Naive thymus-derived CD4-positive, alpha-beta T cell (primary cell): ENCODE measurements at regions of chr4 and their contacts with region 1.

Region 1: DNA sequence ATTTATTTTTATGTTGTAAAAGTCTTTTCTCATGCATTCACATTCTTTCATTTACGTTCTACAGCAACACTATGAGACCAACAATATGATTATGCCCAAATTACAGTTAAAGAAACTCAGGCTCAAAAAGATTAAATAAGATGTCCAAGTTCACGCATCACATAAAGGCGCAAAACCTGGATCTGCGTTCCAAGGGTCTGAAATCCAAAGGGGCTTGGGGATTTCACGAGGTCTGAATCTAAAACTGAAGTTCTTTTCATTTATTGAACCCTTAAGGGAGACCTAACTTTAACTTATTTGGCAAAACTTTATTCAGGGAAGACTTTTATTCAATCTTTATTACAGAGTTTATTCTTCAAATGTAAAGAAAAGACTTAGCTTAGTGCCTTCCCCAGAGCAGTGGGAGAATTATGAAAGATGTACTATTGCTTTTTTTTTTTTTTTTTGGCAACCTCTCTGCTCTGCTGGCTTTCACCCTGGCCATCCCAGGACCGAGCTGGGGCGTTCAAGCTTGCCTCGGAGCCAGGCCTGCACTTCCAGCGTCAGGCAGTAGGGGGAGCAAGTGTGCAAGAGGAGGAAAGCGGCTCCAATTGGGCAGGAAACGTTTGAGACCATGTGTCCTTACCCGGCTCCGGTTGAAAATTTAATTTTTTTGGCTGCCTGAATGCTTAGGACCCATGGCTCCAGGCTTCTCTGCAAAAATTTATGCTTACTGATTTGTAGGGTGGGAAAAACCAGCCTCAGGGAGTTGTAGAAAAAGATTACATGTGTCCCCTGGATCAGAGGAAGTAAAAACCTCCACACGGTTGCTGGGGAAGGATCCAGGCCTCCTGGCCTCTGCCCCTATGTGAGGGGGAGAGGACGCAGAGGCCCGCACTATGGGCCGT is 344.3 kb upstream of the KLF3 start:
- DNase-seq: peak; percentile 73 to 96 (median 83)
- ATAC-seq: peak; percentile 91
- H3K4me3 ChIP-seq: peak overlapping the region; percentile 38
- H3K4me3 Mint-ChIP-seq: peak overlapping the region; percentile 80 to 95 (median 88)
- H3K27ac ChIP-seq: peak overlapping the region; percentile 68
- H3K27ac Mint-ChIP-seq: peak overlapping the region; percentile 87 to 98 (median 94)
- H3K4me1 ChIP-seq: peaks cover 19 to 35% of the 10 kb centered on the region in 2 donors
- H3K4me1 Mint-ChIP-seq: peaks cover 33 to 75% (median 70%) of the 10 kb centered on the region in 7 donors
- H3K27me3 ChIP-seq: no peaks in the 10 kb centered on the region
- H3K27me3 Mint-ChIP-seq: peaks cover 0 to 10% (median 0%) of the 10 kb centered on the region in 5 donors

Region 2: GRCh38 chr4:38062088-38062893 is 257.4 kb before region 1 on chr4:
- CTCF ChIA-PET with region 1: no interaction called
- POLR2A ChIA-PET with region 1: interaction called, 3 read pairs
- intact Hi-C with region 1: loop called (anchors 1 to 2 kb)
- DNase-seq: peak; percentile 15 to 55 (median 41)
- ATAC-seq: peak; percentile 78
- H3K4me3 ChIP-seq: peak overlapping the region; percentile 33
- H3K4me3 Mint-ChIP-seq: peak overlapping the region; percentile 66 to 95 (median 84)
- H3K27ac ChIP-seq: no peak overlapping the region
- H3K27ac Mint-ChIP-seq: peak overlapping the region in 8 of 9 donors; percentile 35 to 80 (median 61)
- H3K4me1 ChIP-seq: no peaks in the 10 kb centered on the region
- H3K4me1 Mint-ChIP-seq: peaks cover 0 to 20% (median 10%) of the 10 kb centered on the region in 7 donors
- H3K27me3 ChIP-seq: no peaks in the 10 kb centered on the region
- H3K27me3 Mint-ChIP-seq: no peaks in the 10 kb centered on the region

Region 3: DNA sequence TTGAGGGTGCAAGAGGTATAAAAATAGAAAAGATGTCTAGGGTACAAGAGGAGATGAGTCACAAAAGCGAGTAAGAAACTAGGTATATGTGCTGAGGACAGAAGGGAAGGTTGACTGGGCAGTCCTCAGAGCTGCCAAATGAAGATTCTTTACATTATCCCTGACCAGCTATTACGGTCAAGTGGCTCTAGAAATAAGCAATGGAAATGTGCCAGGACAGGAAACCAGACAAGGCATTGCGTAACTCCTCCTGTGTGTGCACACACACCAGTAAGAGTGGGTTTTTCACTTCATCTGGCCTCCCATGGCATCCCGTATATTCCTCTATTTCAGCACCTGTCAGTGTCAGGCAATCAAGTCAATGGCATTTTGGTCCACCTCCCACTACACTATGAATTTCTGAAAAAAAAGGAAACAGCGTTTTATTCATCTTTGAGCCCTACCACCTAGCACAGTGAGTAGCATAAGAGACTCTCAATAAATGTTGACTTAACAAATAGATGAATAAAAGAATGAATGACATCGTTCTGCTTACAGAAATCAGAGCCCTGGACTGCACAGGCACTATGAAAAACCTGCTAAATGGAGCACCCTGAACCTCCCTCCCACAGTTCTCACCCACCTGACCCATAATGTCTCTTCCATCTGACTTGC is 281.7 kb after region 1 on chr4:
- CTCF ChIA-PET with region 1: interaction called, 5 read pairs
- POLR2A ChIA-PET with region 1: no interaction called
- intact Hi-C with region 1: loop called in 1 of 2 experiments (anchors 1 kb)
- DNase-seq: no peak
- ATAC-seq: no peak
- H3K4me3 ChIP-seq: no peak overlapping the region
- H3K4me3 Mint-ChIP-seq: no peak overlapping the region
- H3K27ac ChIP-seq: no peak overlapping the region
- H3K27ac Mint-ChIP-seq: peak overlapping the region in 4 of 9 donors; percentile 18 to 27 (median 20)
- H3K4me1 ChIP-seq: peaks cover 5% of the 10 kb centered on the region in 2 donors
- H3K4me1 Mint-ChIP-seq: peaks cover 16 to 40% (median 24%) of the 10 kb centered on the region in 7 donors
- H3K27me3 ChIP-seq: no peaks in the 10 kb centered on the region
- H3K27me3 Mint-ChIP-seq: peaks cover 0 to 10% (median 0%) of the 10 kb centered on the region in 5 donors

Region 4: GRCh38 chr4:39514888-39515401 is 1195.2 kb after region 1 on chr4:
- CTCF ChIA-PET with region 1: no interaction called
- POLR2A ChIA-PET with region 1: no interaction called
- intact Hi-C with region 1: no loop called
- DNase-seq: no peak
- ATAC-seq: no peak
- H3K4me3 ChIP-seq: no peak overlapping the region
- H3K4me3 Mint-ChIP-seq: no peak overlapping the region
- H3K27ac ChIP-seq: no peak overlapping the region
- H3K27ac Mint-ChIP-seq: peak overlapping the region in 1 of 9 donors; percentile 36
- H3K4me1 ChIP-seq: no peaks in the 10 kb centered on the region
- H3K4me1 Mint-ChIP-seq: no peaks in the 10 kb centered on the region
- H3K27me3 ChIP-seq: no peaks in the 10 kb centered on the region
- H3K27me3 Mint-ChIP-seq: no peaks in the 10 kb centered on the region